PC-9 (cell line): ENCODE measurements at regions of chr18 and their contacts with region 1.

Region 1: DNA sequence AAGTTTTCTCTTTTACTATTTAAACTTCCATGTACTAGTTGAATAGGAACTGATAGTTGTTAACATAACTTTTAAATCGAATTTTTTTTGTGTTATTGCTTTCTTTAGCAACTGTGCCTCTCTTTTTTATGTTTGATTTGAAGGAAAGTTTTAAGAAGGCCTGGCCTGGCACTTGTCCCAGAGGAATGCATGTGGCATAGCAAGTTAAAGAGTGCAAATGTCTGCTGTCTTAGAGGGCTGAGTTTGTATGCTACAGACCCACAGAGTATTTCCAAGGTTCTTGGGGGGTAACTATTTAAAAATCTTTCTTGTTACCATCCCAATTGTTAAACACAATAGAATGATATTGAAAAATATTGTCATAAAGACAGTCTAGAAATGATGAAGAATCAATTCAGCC is 47.0 kb downstream of the MTCL1 start:
- DNase-seq: no peak
- H3K4me3 ChIP-seq: no peak overlapping the region
- H3K27ac ChIP-seq: no peak overlapping the region
- H3K4me1 ChIP-seq: no peaks in the 10 kb centered on the region
- H3K27me3 ChIP-seq: no peaks in the 10 kb centered on the region
- CTCF ChIP-seq: no peak

Region 2: GRCh38 chr18:8730080-8730827 is 22.1 kb before region 1 on chr18:
- CTCF ChIA-PET with region 1: no interaction called
- POLR2A ChIA-PET with region 1: interaction called, 13 read pairs
- intact Hi-C with region 1: no loop called
- DNase-seq: peak; percentile 79 to 90
- H3K4me3 ChIP-seq: peak overlapping the region; percentile 2; the same call in 1 of the 2 replicates
- H3K27ac ChIP-seq: peak overlapping the region; percentile 30
- H3K4me1 ChIP-seq: peaks cover 24% of the 10 kb centered on the region
- H3K27me3 ChIP-seq: no peaks in the 10 kb centered on the region
- CTCF ChIP-seq: no peak